Gastrocnemius medialis (tissue), 4 donors: ENCODE measurements at regions of chr10 and their contacts with region 1.

Region 1: DNA sequence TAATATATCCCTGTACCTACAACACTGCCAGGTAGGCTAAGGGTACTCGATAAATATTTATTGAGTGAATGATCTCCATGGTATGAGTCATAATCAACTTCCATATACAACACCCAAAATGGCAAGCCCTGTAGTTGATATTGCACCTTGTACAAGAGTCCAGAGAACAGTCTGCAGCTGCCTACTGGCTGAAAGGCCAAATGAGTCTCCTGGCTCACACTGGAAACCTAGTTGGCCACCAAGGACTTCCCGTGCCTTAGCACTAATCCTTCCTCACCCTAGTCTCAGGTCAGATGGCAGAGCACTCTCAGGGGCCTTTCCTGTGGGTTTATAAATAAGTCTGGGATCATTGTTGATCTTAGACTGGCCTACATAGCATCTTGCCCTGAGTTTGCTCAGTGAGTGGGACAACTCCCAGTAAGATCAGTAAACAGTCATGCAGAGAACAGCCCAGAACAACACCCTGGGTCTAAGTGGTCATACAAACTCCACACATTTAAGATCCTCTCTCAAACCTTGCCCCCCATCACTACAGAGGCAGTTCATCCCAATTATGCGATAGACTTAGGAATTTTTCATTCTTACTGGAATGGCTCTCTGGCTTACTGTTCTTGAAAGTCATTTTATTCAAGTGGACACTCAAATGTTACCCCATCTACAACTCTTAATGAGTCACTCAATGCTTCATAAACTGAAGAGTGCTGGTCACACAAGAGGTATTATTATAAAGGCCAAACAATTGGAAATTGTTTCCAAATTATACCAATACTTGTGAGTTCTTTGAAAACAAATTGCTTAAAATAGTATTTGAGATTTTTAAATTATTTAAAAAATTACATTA is 14.7 kb upstream of the SLC16A9 start:
- DNase-seq: peak; percentile 83 to 85
- ATAC-seq: peak; percentile 97
- H3K4me3 ChIP-seq: no peak overlapping the region
- H3K27ac ChIP-seq: peak overlapping the region; percentile 75 to 91 (median 80)
- H3K4me1 ChIP-seq: peaks cover 37 to 39% of the 10 kb centered on the region in 2 donors
- H3K27me3 ChIP-seq: no peaks in the 10 kb centered on the region
- CTCF ChIP-seq: no peak
- POLR2A ChIP-seq: peak in 1 of 2 donors; percentile 67

Region 2: DNA sequence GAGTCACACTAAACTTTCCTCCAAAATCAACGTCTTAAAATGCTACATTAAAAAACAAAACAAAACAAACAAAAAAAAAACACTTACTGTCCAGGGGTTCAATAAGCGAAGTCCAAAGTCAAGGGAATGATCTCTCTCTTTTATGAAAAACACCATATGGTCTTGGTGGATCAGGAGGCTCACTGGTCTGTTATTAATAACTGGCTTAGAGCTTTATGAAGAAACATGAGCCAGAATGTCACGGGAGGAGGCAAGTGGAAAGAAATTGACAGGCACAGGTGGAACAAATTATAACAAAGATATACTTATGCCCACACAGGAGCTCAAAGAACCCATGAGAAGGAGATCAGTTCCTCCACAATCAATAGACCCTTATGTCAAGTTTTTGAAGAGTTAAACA is 28.9 kb after region 1 on chr10 and contains the start of gene MRLN:
- in situ Hi-C with region 1: no loop called
- intact Hi-C with region 1: loop called (anchors 1 kb)
- DNase-seq: peak; percentile 45 to 56
- ATAC-seq: peak; percentile 91 to 95
- H3K4me3 ChIP-seq: peak within 1 kb of the TSS; percentile 40 to 64 (median 63)
- H3K27ac ChIP-seq: peak within 1 kb of the TSS; percentile 84 to 93 (median 89)
- H3K4me1 ChIP-seq: peaks cover 29 to 32% of the 10 kb centered on the region in 2 donors
- H3K27me3 ChIP-seq: no peaks in the 10 kb centered on the region
- CTCF ChIP-seq: no peak
- POLR2A ChIP-seq: peak; percentile 68 to 86
- total RNA-seq, gene MRLN: 67.7 to 352 (median 188) TPM

Region 3: GRCh38 chr10:59808896-59809643 is 84.8 kb after region 1 on chr10:
- in situ Hi-C with region 1: no loop called
- intact Hi-C with region 1: loop called (anchors 5 kb)
- DNase-seq: peak; percentile 82 to 87
- ATAC-seq: peak; percentile 83 to 88
- H3K4me3 ChIP-seq: no peak overlapping the region
- H3K27ac ChIP-seq: peak overlapping the region; percentile 61 to 86 (median 66)
- H3K4me1 ChIP-seq: peaks cover 24 to 33% of the 10 kb centered on the region in 2 donors
- H3K27me3 ChIP-seq: no peaks in the 10 kb centered on the region
- CTCF ChIP-seq: peak; percentile 71 to 85 (median 81)
- POLR2A ChIP-seq: no peak

Region 4: DNA sequence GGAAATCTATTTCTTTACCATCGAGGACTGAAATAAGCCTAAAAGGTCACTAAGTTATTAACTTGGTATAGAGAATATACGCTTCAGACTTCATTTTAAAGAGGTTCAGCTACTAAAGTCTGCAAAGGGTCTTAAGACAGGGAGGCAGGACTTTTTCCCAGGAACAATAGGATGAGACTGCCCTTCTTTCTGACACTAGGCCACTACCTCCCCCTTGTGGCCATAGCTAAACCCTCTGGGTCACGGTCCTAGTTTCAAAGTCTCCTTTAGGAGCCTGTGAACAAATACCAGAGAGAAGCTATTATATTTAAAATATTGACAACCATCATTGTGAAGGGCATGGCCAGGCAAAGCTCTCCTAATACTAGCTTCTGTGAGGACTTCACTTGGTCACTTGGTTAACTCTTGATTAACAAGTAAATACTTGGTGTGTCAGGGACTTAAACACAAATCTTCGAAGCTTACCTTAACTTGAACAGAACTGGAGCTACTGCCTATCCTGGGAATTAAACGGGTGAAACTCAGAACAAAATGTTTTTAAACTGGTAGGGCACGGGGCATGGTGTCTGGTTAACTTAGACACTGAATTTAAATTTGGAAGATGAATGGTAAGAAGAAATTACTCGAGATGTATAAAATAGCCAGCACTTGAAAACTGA is 106.4 kb after region 1 on chr10:
- in situ Hi-C with region 1: no loop called
- intact Hi-C with region 1: no loop called
- DNase-seq: peak in 1 of 2 donors; percentile 31
- ATAC-seq: peak in 1 of 2 donors; percentile 70
- H3K4me3 ChIP-seq: no peak overlapping the region
- H3K27ac ChIP-seq: no peak overlapping the region
- H3K4me1 ChIP-seq: peaks cover 30 to 40% of the 10 kb centered on the region in 2 donors
- H3K27me3 ChIP-seq: no peaks in the 10 kb centered on the region
- CTCF ChIP-seq: peak; percentile 65 to 82 (median 72)
- POLR2A ChIP-seq: no peak